Activated CD4-positive, alpha-beta T cell treated with anti-CD3 and anti-CD28 coated beads for 36 hours (primary cell): ENCODE measurements at regions of chr4 and their contacts with region 1.

Region 1: GRCh38 chr4:139177868-139178611 is 1.0 kb upstream of the ELF2 start:
- DNase-seq: peak; percentile 95
- ATAC-seq: peak; percentile 77
- H3K4me3 Mint-ChIP-seq: peak overlapping the region; percentile 81
- H3K27ac Mint-ChIP-seq: peak overlapping the region; percentile 72
- H3K4me1 Mint-ChIP-seq: peaks cover 12% of the 10 kb centered on the region
- H3K27me3 Mint-ChIP-seq: peaks cover 12% of the 10 kb centered on the region

Region 2: DNA sequence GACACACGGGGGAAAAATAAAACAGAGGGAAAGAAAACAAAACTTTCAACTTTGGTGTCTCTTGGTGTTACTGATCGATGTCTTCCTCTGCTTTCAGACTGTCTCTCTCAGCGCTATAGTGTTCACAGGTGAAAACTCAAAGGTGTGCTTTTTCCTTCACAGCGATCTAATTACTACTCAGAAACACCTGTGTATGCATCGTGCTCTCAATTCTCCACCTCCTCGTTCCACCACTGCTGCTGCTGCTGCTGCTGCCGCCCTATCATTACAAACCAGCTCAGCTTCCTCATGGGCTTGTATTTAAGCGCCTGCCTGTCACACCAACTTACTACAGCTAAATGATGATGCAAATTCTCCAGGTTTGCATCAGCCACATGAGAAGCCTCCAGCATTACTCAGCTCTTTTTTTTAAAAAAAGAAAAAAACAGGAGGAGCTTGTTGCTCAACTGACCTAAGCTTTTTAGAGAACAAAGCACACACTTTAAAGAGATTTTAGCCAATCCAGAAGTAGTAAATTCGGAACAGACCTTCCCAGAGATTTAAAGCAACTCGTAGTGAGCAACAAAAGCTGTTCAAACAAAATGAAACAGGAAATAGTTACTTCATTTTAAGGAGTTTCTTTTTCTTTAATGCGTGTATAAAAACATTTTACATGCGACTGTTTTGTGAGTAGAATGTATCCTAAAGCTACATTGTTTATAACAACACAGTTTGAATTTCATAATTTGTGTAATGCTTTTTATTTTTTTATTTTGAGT is 935.8 kb before region 1 on chr4 and contains the start of gene SLC7A11:
- CTCF ChIA-PET with region 1: no interaction called
- POLR2A ChIA-PET with region 1: no interaction called
- intact Hi-C with region 1: loop called in 1 of 2 experiments (anchors 5 kb)
- DNase-seq: peak; percentile 75
- ATAC-seq: peak; percentile 95
- H3K4me3 Mint-ChIP-seq: peak within 1 kb of the TSS; percentile 78
- H3K27ac Mint-ChIP-seq: peak within 1 kb of the TSS; percentile 88
- H3K4me1 Mint-ChIP-seq: peaks cover 7% of the 10 kb centered on the region
- H3K27me3 Mint-ChIP-seq: no peaks in the 10 kb centered on the region
- total RNA-seq, gene SLC7A11: 4.4 to 4.9 TPM

Region 3: GRCh38 chr4:139083956-139084803 is 93.9 kb before region 1 on chr4:
- CTCF ChIA-PET with region 1: interaction called, 3 read pairs
- POLR2A ChIA-PET with region 1: no interaction called
- intact Hi-C with region 1: loop called (anchors 1 kb)
- DNase-seq: peak; percentile 92
- ATAC-seq: peak; percentile 64
- H3K4me3 Mint-ChIP-seq: peak overlapping the region; percentile 100
- H3K27ac Mint-ChIP-seq: peak overlapping the region; percentile 99
- H3K4me1 Mint-ChIP-seq: peaks cover 30% of the 10 kb centered on the region
- H3K27me3 Mint-ChIP-seq: no peaks in the 10 kb centered on the region

Region 4: DNA sequence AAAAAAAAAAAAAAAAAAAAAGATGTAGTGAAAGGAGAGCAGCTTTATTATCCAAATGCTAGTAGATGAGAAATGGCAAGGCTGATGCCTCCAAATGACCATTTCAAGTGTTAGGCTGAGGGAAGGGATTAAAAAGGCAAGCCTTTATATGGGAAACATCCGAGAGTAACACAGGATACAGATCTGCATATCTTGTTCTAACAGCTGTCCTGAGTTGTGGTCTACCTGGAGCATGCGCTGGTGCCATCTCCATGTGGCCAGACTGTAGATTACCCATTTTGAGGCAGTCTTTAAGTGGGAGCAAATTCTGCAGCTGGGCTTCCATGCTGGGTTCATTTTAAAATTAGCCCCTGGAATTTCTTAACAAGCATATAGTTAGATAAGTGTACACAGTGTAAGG is 25.0 kb after region 1 on chr4:
- CTCF ChIA-PET with region 1: no interaction called
- POLR2A ChIA-PET with region 1: no interaction called
- intact Hi-C with region 1: no loop called
- DNase-seq: no peak
- ATAC-seq: no peak
- H3K4me3 Mint-ChIP-seq: no peak overlapping the region
- H3K27ac Mint-ChIP-seq: no peak overlapping the region
- H3K4me1 Mint-ChIP-seq: no peaks in the 10 kb centered on the region
- H3K27me3 Mint-ChIP-seq: peaks cover 2% of the 10 kb centered on the region

Region 5: GRCh38 chr4:139295206-139295941 is 117.3 kb after region 1 on chr4:
- CTCF ChIA-PET with region 1: interaction called, 4 read pairs
- POLR2A ChIA-PET with region 1: interaction called, 34 read pairs
- intact Hi-C with region 1: loop called (anchors 1 kb)
- DNase-seq: peak; percentile 99
- ATAC-seq: peak; percentile 89
- H3K4me3 Mint-ChIP-seq: peak overlapping the region; percentile 95
- H3K27ac Mint-ChIP-seq: peak overlapping the region; percentile 96
- H3K4me1 Mint-ChIP-seq: peaks cover 38% of the 10 kb centered on the region
- H3K27me3 Mint-ChIP-seq: no peaks in the 10 kb centered on the region

Region 6: DNA sequence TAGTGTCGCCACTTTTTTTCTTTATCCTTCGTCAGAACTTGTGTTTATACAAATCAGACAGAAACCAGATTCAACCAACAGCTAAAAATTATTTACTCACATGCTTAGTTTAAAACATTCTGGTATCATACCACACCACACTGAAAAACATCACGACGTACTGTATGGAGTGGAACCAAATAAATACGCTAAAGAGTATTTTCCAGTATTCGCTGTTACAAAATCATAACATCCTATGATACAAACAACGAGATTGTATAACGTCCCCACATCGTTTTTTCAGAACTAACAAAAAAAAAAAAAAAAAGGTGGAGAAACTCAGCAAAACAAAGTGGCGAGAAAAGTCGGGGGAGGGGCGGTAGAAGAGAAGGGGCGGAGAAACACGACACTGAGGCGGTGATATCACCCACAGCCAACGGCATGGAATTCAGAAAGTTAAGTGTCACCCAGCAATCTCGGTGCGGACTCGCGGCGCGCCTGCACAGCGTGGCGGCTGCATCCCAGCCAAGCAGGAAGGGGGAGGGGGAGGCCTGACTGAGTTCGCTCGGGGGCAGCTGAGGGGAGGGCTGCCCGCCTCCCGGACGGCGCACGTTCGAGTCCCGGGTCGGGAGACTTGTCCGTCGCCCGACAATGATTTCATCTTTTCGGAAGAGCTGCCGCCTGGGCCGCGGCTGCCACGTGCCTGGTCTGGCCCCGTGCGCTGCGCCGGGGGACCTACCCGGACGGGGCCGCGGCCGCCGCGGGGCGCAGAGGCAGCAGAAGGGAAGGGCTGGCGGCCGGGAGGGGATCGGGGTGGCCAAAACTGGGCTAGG is 377.1 kb after region 1 on chr4:
- CTCF ChIA-PET with region 1: no interaction called
- POLR2A ChIA-PET with region 1: no interaction called
- intact Hi-C with region 1: loop called in 1 of 2 experiments (anchors 1 kb)
- DNase-seq: peak; percentile 91
- ATAC-seq: peak; percentile 76
- H3K4me3 Mint-ChIP-seq: peak overlapping the region; percentile 96
- H3K27ac Mint-ChIP-seq: peak overlapping the region; percentile 91
- H3K4me1 Mint-ChIP-seq: peaks cover 45% of the 10 kb centered on the region
- H3K27me3 Mint-ChIP-seq: no peaks in the 10 kb centered on the region

Region 7: GRCh38 chr4:140095694-140096482 is 917.8 kb after region 1 on chr4:
- CTCF ChIA-PET with region 1: no interaction called
- POLR2A ChIA-PET with region 1: no interaction called
- intact Hi-C with region 1: loop called in 1 of 2 experiments (anchors 10 kb)
- DNase-seq: peak; percentile 81
- ATAC-seq: peak; percentile 83
- H3K4me3 Mint-ChIP-seq: peak overlapping the region; percentile 75
- H3K27ac Mint-ChIP-seq: peak overlapping the region; percentile 99
- H3K4me1 Mint-ChIP-seq: peaks cover 93% of the 10 kb centered on the region
- H3K27me3 Mint-ChIP-seq: no peaks in the 10 kb centered on the region